Common myeloid progenitor, CD34-positive (primary cell): ENCODE measurements at regions of chr10 and their contacts with region 1.

Region 1: GRCh38 chr10:17237915-17238444 is 9.9 kb downstream of the VIM start:
- DNase-seq: peak in 2 of 3 donors; percentile 79 to 82
- H3K4me3 ChIP-seq: no peak overlapping the region
- H3K27ac ChIP-seq: no peak overlapping the region
- H3K4me1 ChIP-seq: no peaks in the 10 kb centered on the region
- H3K27me3 ChIP-seq: no peaks in the 10 kb centered on the region

Region 2: GRCh38 chr10:17075533-17076359 is 162.2 kb before region 1 on chr10:
- CTCF ChIA-PET with region 1: no interaction called
- POLR2A ChIA-PET with region 1: interaction called, 10 read pairs
- DNase-seq: peak in 1 of 3 donors; percentile 13
- H3K4me3 ChIP-seq: no peak overlapping the region
- H3K27ac ChIP-seq: no peak overlapping the region
- H3K4me1 ChIP-seq: no peaks in the 10 kb centered on the region
- H3K27me3 ChIP-seq: no peaks in the 10 kb centered on the region

Region 3: GRCh38 chr10:17216217-17216900 is 21.6 kb before region 1 on chr10:
- CTCF ChIA-PET with region 1: no interaction called
- POLR2A ChIA-PET with region 1: no interaction called
- DNase-seq: peak; percentile 97 to 99 (median 98)
- H3K4me3 ChIP-seq: peak overlapping the region in 3 of 7 experiments; percentile 11 to 48 (median 39)
- H3K27ac ChIP-seq: peak overlapping the region; percentile 100
- H3K4me1 ChIP-seq: peaks cover 21 to 54% (median 42%) of the 10 kb centered on the region in 4 experiments
- H3K27me3 ChIP-seq: no peaks in the 10 kb centered on the region

Region 4: DNA sequence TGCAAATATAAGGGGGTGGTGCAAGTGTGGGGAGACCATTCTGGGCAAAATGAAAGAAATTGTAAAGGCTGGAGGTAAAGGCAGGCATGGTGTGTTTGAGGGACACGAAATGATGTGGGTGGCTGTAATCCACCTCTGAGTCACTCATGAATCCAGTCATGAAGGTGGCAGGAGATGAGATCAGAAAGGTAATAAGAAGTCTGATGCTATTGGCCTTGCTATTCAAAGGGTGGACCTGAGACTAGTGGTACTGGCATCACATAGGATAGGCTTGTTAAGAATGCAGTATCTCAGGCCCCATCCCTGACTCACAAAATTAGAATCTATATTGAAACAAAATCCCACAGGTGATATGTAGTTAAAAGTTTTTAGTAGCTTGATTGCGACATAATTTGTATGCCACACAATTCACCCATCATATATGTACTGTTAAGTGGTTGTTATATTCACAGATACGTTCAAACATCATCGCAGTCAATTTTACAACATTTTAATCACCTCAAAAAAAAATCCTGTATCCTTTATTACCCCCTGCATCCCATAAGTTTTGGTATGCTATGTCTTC is 130.8 kb after region 1 on chr10:
- CTCF ChIA-PET with region 1: no interaction called
- POLR2A ChIA-PET with region 1: no interaction called
- DNase-seq: no peak
- H3K4me3 ChIP-seq: no peak overlapping the region
- H3K27ac ChIP-seq: no peak overlapping the region
- H3K4me1 ChIP-seq: no peaks in the 10 kb centered on the region
- H3K27me3 ChIP-seq: no peaks in the 10 kb centered on the region